ENCODE measurements at regions of chr4 and their contacts with region 1.

Region 1: DNA sequence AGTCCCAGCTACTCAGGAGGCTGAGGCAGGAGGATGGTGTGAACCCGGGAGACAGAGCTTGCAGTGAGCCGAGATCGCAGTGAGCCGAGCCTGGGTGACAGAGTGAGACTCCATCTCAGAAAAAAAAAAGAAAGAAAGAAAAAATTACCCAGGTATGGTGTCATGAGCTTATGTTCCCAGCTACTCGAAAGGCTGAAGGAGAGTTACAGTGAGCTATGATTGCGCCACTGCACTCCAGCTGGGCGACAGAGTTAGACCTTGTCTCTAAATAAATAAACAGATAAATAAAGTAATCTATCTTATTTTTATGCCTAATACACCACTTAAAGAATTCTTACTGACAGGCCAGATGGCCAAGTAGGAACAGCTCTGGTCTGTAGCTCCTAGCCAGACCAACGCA is 73.0 kb downstream of the SLC39A8 start:
- DNase-seq: no peak
- H3K4me3 ChIP-seq: no peak overlapping the region
- H3K27ac ChIP-seq: no peak overlapping the region
- H3K4me1 ChIP-seq: no peaks in the 10 kb centered on the region
- H3K27me3 ChIP-seq: no peaks in the 10 kb centered on the region
- CTCF ChIP-seq: no peak
- POLR2A ChIP-seq: no peak

Region 2: GRCh38 chr4:100379583-100380105 is 1892.7 kb before region 1 on chr4:
- intact Hi-C with region 1: loop called (anchors 10 kb)
- DNase-seq: no peak
- H3K4me3 ChIP-seq: no peak overlapping the region
- H3K27ac ChIP-seq: no peak overlapping the region
- H3K4me1 ChIP-seq: no peaks in the 10 kb centered on the region
- H3K27me3 ChIP-seq: no peaks in the 10 kb centered on the region
- CTCF ChIP-seq: no peak
- POLR2A ChIP-seq: no peak

Region 3: GRCh38 chr4:100679926-100680325 is 1592.4 kb before region 1 on chr4:
- intact Hi-C with region 1: no loop called
- DNase-seq: no peak
- H3K4me3 ChIP-seq: no peak overlapping the region
- H3K27ac ChIP-seq: no peak overlapping the region
- H3K4me1 ChIP-seq: no peaks in the 10 kb centered on the region
- H3K27me3 ChIP-seq: no peaks in the 10 kb centered on the region
- CTCF ChIP-seq: no peak
- POLR2A ChIP-seq: no peak

Region 4: GRCh38 chr4:101695176-101695575 is 577.1 kb before region 1 on chr4:
- intact Hi-C with region 1: loop called (anchors 5 kb)
- DNase-seq: no peak
- H3K4me3 ChIP-seq: no peak overlapping the region
- H3K27ac ChIP-seq: no peak overlapping the region
- H3K4me1 ChIP-seq: no peaks in the 10 kb centered on the region
- H3K27me3 ChIP-seq: no peaks in the 10 kb centered on the region
- CTCF ChIP-seq: no peak
- POLR2A ChIP-seq: no peak

Region 5: GRCh38 chr4:102234243-102234838 is 38.0 kb before region 1 on chr4:
- intact Hi-C with region 1: no loop called
- DNase-seq: no peak
- H3K4me3 ChIP-seq: no peak overlapping the region
- H3K27ac ChIP-seq: no peak overlapping the region
- H3K4me1 ChIP-seq: no peaks in the 10 kb centered on the region
- H3K27me3 ChIP-seq: no peaks in the 10 kb centered on the region
- CTCF ChIP-seq: no peak
- POLR2A ChIP-seq: no peak

Measured in breast epithelium (tissue), 4 donors.